Activated T-helper 1 cell treated with anti-CD3 and anti-CD28 coated beads, Interleukin-12 subunit alpha, Interleukin-12 subunit beta, Interleukin-2, Interleukin-4 antibody, amounts not matched to agents 30 ng/mL and 10 ng/mL and 1 ng/mL, durations not matched to agents 14 hours and 24 hours and 36 hours (primary cell): ENCODE measurements at regions of chr2 and their contacts with region 1.

Region 1: GRCh38 chr2:84865181-84865783 is 15.6 kb downstream of the TRABD2A start:
- DNase-seq: no peak
- H3K4me3 Mint-ChIP-seq: no peak overlapping the region
- H3K27ac Mint-ChIP-seq: peak overlapping the region; percentile 67
- H3K4me1 Mint-ChIP-seq: peaks cover 70% of the 10 kb centered on the region
- H3K27me3 Mint-ChIP-seq: no peaks in the 10 kb centered on the region

Region 2: DNA sequence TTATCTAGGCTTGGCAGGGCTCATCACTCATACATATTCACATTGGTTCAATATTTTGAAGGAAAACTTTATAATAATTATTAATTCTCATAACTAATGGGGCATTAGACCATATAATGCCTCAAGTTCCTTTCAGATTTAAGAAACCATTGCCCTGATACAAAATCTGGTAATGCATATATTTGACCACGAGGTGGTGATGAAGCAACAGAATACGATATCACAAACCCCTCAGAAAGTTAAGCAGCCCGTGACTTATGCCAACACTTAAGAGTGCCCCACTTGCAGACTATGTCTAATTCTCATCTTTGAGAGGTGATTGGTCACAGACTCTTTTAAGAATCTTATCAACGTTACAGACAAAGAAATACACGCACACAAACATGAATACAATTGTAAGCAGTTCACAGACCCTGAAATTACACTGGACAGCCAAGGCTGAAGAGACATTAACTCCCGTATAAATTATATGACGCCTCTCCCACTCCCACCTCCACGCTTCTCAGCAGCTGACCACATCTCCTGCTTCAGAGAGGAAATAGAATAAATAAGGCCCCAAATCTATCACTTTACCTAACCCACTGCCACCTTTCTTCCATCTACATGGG is 369.6 kb before region 1 on chr2:
- intact Hi-C with region 1: loop called (anchors 1 kb)
- DNase-seq: peak; percentile 16
- H3K4me3 Mint-ChIP-seq: no peak overlapping the region
- H3K27ac Mint-ChIP-seq: no peak overlapping the region
- H3K4me1 Mint-ChIP-seq: peaks cover 7% of the 10 kb centered on the region
- H3K27me3 Mint-ChIP-seq: no peaks in the 10 kb centered on the region

Region 3: DNA sequence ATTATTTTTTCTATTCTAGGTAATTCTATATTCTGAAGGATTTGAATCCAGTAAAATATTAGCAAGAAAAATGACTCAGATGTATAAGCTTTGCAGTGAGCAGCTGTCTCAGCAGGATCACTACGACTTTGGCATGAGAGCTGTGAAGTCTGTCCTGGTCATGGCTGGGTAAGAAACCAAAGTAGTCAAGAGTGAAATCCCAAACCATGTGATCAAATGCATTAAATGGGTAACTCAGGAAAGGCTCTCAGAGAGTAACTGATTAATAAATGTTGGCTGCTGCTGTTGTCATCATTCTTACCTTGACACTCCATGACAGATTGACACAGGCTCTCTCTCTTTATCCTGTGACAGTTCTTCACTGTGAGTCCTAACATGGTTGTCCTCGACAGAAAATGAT is 224.9 kb before region 1 on chr2:
- intact Hi-C with region 1: loop called (anchors 5 kb)
- DNase-seq: no peak
- H3K4me3 Mint-ChIP-seq: no peak overlapping the region
- H3K27ac Mint-ChIP-seq: no peak overlapping the region
- H3K4me1 Mint-ChIP-seq: no peaks in the 10 kb centered on the region
- H3K27me3 Mint-ChIP-seq: no peaks in the 10 kb centered on the region

Region 4: GRCh38 chr2:84741296-84741765 is 124.0 kb before region 1 on chr2:
- intact Hi-C with region 1: loop called (anchors 2 kb)
- DNase-seq: peak; percentile 21
- H3K4me3 Mint-ChIP-seq: no peak overlapping the region
- H3K27ac Mint-ChIP-seq: no peak overlapping the region
- H3K4me1 Mint-ChIP-seq: peaks cover 11% of the 10 kb centered on the region
- H3K27me3 Mint-ChIP-seq: peaks cover 1% of the 10 kb centered on the region